Activated naive CD4-positive, alpha-beta T cell treated with anti-CD3 and anti-CD28 coated beads for 36 hours (primary cell): ENCODE measurements at regions of chr18 and their contacts with region 1.

Region 1: GRCh38 chr18:77223653-77224052 is 26.0 kb upstream of the GALR1 start:
- DNase-seq: no peak
- H3K4me3 Mint-ChIP-seq: no peak overlapping the region
- H3K27ac Mint-ChIP-seq: no peak overlapping the region
- H3K4me1 Mint-ChIP-seq: peaks cover 15% of the 10 kb centered on the region
- H3K27me3 Mint-ChIP-seq: peaks cover 1% of the 10 kb centered on the region

Region 2: DNA sequence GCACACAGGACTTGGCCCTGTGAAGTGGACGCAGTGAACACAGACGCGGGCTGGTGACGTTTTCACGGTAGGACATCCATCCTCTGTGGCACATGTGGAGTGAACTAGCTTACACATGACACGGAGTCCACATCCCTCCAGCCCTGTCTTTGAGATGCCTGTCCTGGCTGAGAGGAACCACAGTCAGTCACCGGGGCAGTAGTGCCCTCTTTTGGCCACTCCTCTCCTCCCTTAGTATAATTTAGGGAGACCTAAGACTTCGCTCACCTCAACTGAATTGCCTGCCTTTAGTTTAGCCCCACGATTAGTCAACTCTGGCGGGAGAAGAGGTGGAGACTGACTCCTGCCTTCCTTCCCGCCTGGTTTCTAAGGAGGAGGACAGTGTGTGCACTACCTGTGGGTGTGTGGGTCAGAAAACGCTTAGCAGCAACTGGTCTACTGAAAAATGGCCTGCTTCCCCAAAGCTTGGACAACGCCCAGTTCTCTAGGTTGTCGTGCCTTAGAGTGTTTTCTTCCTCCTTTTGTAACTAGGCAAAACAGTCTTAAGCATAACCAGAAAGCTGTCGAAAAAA is 161.6 kb before region 1 on chr18:
- CTCF ChIA-PET with region 1: no interaction called
- intact Hi-C with region 1: loop called (anchors 1 kb)
- DNase-seq: peak; percentile 55
- H3K4me3 Mint-ChIP-seq: peak overlapping the region; percentile 11
- H3K27ac Mint-ChIP-seq: peak overlapping the region; percentile 98
- H3K4me1 Mint-ChIP-seq: peaks cover 78% of the 10 kb centered on the region
- H3K27me3 Mint-ChIP-seq: no peaks in the 10 kb centered on the region

Region 3: DNA sequence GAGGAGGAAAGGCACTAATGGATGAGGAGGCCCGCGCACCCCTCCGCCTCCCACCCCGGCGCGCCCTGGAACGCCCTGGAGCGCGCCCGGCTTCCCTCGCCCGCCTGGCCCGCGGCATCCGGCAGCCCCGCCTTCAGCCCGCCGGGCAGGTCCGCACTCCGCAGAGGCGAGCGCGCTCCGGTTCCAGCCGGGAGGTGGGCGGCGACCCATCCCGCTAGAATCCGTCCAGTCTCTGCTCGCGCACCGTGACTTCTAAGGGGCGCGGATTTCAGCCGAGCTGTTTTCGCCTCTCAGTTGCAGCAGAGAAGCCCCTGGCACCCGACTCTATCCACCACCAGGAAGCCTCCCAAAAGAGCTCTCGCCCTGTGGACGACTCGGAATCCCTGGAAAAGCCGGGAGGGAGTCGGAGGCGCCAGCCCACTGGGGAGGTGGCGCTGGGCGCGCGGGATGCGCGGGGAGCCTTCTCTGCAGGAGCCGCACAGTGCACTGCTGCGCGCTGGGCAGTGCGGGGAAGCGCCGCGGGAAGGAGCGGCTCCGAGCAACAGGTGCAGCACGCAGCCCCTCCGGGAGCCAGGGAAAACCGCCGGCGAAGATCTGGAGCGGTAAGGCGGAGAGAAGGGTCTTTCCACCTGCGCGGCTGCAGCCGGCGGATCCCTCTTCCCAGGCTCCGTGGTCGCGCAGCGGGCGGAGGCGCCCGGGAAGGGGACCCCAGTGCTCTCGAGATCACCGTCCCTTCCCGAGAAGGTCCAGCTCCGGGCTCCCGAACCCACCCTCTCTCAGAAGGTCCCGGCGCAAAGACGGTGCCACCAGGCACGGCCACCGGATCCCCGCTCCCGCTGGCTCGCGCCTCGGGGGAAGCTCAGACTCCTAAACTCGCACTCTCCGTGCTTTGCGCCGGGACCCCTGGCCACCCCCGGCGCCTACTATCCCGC is 26.2 kb after region 1 on chr18 and contains the start of gene GALR1:
- CTCF ChIA-PET with region 1: no interaction called
- intact Hi-C with region 1: loop called (anchors 2 kb)
- DNase-seq: no peak
- H3K4me3 Mint-ChIP-seq: peak within 1 kb of the TSS; percentile 61
- H3K27ac Mint-ChIP-seq: no peak within 1 kb of the TSS
- H3K4me1 Mint-ChIP-seq: peaks cover 14% of the 10 kb centered on the region
- H3K27me3 Mint-ChIP-seq: peaks cover 67% of the 10 kb centered on the region
- total RNA-seq, gene GALR1: not detected

Region 4: GRCh38 chr18:77560341-77560992 is 336.8 kb after region 1 on chr18:
- CTCF ChIA-PET with region 1: no interaction called
- intact Hi-C with region 1: loop called (anchors 1 kb)
- DNase-seq: peak; percentile 18
- H3K4me3 Mint-ChIP-seq: no peak overlapping the region
- H3K27ac Mint-ChIP-seq: no peak overlapping the region
- H3K4me1 Mint-ChIP-seq: peaks cover 6% of the 10 kb centered on the region
- H3K27me3 Mint-ChIP-seq: peaks cover 26% of the 10 kb centered on the region

Region 5: GRCh38 chr18:77650799-77651385 is 427.2 kb after region 1 on chr18:
- CTCF ChIA-PET with region 1: no interaction called
- intact Hi-C with region 1: loop called (anchors 10 kb)
- DNase-seq: peak; percentile 70
- H3K4me3 Mint-ChIP-seq: no peak overlapping the region
- H3K27ac Mint-ChIP-seq: no peak overlapping the region
- H3K4me1 Mint-ChIP-seq: no peaks in the 10 kb centered on the region
- H3K27me3 Mint-ChIP-seq: peaks cover 18% of the 10 kb centered on the region